ENCODE measurements at regions of chr17 and their contacts with region 1.

Region 1: DNA sequence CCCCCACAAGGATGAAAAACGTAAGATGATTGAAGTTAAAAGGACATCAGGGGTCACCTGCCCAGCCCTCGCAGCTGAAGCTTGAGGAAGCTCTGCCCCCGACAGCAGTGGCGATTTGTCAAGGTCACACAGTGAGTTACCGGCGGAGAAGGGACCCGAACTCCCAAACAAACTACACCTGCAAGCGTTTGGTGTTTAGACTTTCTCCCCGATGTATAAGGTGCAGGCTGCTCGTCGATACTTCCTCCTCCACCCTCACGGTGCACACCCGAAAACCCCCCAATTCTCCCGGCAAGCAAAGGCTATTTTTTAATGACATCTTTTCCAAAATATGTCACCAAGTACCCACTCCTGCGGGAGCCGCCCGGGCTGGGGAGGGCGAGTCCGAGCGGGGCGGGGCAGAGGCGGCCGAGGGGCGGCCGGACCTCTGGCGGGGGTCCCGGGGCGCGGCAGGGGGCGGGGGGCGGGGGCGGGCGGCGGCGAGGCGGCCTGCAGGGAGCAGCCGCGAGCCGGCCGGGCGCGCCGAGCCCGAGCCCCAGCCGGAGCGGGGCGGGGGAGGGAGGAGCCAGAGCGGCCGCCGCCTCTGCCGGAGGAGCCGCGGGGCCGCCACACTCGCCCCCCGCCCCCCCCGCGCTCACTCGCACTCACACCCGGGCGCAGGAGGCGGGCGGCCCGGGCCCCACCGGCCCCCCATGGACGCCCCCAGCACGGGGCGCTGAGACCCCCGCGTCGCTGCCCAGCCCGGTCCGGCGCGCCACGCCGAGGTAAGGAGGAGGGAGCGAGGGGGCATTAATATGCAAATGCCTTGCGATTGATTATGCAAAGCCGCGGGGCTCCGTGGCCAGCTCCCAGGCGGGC is at the start of gene THRA:
- DNase-seq: peak; percentile 75
- H3K4me3 ChIP-seq: peak within 1 kb of the TSS; percentile 99
- H3K27ac ChIP-seq: peak within 1 kb of the TSS; percentile 93
- H3K4me1 ChIP-seq: no peaks in the 10 kb centered on the region
- H3K27me3 ChIP-seq: no peaks in the 10 kb centered on the region
- CTCF ChIP-seq: peak in 1 of 4 experiments; percentile 31
- POLR2A ChIP-seq: peak; percentile 40
- total RNA-seq, gene THRA: 35.2 to 79.8 TPM

Region 2: DNA sequence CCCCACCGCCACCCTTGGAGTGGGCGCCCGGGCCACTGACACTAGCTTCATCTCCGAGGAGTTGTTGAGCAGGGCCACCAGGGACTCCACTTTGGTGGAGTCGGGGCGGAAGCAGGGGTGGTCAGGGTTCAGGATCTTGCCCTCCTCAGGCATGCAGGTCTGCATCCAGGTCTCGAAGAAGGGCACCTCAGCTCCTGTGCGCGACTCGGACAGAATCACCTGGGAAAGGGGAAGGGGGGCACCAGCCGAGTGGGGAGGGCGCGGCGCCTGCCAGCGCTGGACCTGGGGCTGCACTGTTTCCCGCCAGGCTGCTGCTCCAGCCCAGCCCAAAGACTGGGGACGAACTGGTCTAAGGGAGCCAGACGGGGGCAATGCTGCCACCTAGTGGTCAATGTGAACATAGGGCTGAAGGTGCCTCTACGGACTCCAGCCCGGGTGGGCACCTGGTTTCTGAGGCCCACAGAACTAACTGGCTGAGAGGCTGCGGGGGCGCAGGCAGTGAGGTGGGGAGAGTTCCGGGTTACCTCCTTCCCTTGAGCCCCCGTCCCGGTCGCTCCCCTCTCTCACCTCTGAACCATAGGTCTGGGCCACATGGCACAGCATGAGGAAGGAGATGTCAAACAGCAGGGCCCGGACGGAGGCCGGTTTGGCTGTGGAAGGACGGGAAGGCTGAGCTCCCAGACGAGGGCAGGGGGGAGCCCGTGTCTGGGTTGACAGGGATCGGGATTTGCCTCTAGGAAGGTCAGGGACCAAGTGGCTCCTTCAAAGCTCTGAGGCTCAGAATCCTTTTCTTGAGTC is 35.5 kb before region 1 on chr17:
- intact Hi-C with region 1: no loop called
- DNase-seq: peak; percentile 82
- H3K4me3 ChIP-seq: no peak overlapping the region
- H3K27ac ChIP-seq: peak overlapping the region; percentile 5 to 52
- H3K4me1 ChIP-seq: peaks cover 20% of the 10 kb centered on the region
- H3K27me3 ChIP-seq: no peaks in the 10 kb centered on the region
- CTCF ChIP-seq: peak; percentile 89 to 93 (median 91)
- POLR2A ChIP-seq: no peak

Region 3: GRCh38 chr17:40075201-40075941 is 12.8 kb after region 1 on chr17:
- intact Hi-C with region 1: loop called (anchors 1 kb)
- DNase-seq: peak; percentile 85
- H3K4me3 ChIP-seq: no peak overlapping the region
- H3K27ac ChIP-seq: peak overlapping the region; percentile 89 to 93
- H3K4me1 ChIP-seq: peaks cover 56% of the 10 kb centered on the region
- H3K27me3 ChIP-seq: no peaks in the 10 kb centered on the region
- CTCF ChIP-seq: peak; percentile 88 to 93 (median 92)
- POLR2A ChIP-seq: peak; percentile 20

Region 4: GRCh38 chr17:40098846-40099618 is 36.5 kb after region 1 on chr17:
- intact Hi-C with region 1: loop called (anchors 5 kb)
- DNase-seq: peak; percentile 99
- H3K4me3 ChIP-seq: peak overlapping the region; percentile 54 to 65
- H3K27ac ChIP-seq: peak overlapping the region; percentile 88 to 95
- H3K4me1 ChIP-seq: no peaks in the 10 kb centered on the region
- H3K27me3 ChIP-seq: no peaks in the 10 kb centered on the region
- CTCF ChIP-seq: no peak
- POLR2A ChIP-seq: peak; percentile 89

Region 5: DNA sequence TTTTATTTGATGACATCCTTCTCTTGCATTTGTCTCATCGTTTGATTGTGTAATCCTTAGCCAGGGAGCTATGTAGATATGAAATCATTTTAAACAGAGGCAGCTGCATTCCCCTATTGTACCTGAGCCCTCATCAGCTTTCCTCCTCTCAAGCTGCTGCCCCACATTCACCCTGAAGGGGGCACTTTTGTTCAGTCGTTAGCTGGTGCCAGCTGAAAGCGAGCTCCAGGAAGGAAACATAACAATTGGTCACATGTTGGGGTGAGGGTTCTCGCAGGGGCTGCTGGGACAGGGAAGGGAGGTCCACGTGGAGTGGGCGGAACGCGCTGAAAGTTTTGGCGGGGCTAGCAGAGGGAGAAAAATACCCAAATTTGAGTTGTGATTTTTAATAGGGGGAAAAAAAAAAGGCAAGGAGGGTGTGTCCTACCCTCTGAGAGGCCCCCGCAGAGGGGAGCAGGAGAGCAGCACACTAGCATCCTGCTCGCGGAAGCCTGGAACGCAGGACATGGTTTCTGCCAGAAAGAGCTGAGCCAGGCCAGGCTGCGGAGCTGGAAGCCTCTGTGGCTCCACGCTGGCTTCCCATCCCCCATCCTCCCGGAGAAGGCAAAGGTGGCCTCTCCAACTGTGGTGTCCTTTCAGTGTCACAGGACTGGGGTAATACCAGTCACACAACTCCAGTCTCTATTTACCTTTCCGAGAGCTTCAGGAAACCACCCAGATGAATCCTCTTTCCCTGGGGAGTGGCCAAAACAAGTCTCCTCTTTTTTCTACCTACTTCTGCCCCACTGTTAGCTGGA is 50.8 kb after region 1 on chr17:
- intact Hi-C with region 1: loop called (anchors 5 kb)
- DNase-seq: peak; percentile 95
- H3K4me3 ChIP-seq: peak overlapping the region; percentile 19 to 36
- H3K27ac ChIP-seq: peak overlapping the region; percentile 88 to 97
- H3K4me1 ChIP-seq: peaks cover 36% of the 10 kb centered on the region
- H3K27me3 ChIP-seq: no peaks in the 10 kb centered on the region
- CTCF ChIP-seq: peak; percentile 90 to 100 (median 95)
- POLR2A ChIP-seq: peak; percentile 22

Region 6: DNA sequence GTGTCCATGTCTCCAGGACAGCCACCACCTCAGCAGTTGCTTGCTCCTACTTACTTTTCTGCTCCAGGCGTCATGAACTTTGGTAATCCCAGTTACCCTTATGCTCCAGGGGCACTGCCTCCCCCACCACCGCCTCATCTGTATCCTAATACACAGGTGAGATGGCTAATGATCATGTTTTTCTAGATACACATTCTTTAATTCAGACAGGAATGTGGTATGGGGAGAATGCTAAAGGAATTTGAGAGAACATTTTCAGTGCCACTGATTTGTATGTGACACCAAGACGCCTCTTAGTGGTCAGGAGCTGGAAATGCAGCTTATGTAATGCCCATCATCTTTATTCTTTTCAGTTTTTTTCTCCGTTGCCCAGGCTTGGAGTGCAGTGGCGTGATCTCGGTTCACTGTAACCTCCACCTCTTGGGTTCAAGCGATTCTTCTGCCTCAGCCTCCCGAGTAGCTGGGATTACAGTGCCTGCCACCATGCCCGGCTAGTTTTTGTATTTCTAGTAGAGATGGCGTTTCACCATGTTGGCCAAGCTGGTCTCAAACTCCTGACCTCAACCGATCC is 105.8 kb after region 1 on chr17:
- intact Hi-C with region 1: loop called (anchors 5 kb)
- DNase-seq: peak; percentile 36
- H3K4me3 ChIP-seq: no peak overlapping the region
- H3K27ac ChIP-seq: peak overlapping the region; percentile 42 to 56
- H3K4me1 ChIP-seq: no peaks in the 10 kb centered on the region
- H3K27me3 ChIP-seq: no peaks in the 10 kb centered on the region
- CTCF ChIP-seq: peak; percentile 43 to 95 (median 86)
- POLR2A ChIP-seq: no peak